ENCODE measurements at regions of chr6 and their contacts with region 1.

Region 1: DNA sequence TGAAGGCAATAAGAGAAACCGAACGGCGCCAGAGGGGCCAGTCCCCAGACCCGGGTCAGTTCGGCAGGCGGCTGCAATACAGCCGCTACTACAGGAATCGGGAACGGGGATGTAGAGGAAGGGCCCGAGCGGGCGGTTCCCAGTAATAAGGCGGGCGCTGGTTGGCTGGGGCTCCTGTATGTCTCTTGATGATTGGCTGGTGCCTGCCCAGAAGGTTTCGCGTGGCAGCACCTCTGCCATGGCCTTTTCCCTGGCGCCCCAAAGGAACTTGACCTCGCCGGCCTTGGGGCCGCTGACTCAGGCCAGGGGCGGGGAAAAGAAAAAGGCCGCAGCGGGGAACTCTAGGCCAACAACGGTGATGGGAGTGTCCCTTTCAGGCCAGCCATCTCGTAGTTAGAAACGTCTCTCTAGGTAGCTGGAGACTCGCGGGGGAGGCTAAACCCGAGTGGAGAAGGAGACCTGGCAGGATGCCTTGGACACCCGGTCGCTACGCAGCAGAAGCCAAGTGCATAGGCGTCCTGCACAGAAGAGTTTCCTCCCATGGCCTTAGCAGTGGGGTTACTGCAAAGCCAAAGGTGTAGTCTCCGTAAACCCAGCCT is at the start of gene IBTK:
- DNase-seq: peak; percentile 92
- H3K4me3 Mint-ChIP-seq: peak within 1 kb of the TSS; percentile 92
- H3K27ac Mint-ChIP-seq: peak within 1 kb of the TSS; percentile 89
- H3K4me1 Mint-ChIP-seq: peaks cover 36% of the 10 kb centered on the region
- H3K27me3 Mint-ChIP-seq: no peaks in the 10 kb centered on the region
- total RNA-seq, gene IBTK: 33.7 to 34.7 TPM

Region 2: DNA sequence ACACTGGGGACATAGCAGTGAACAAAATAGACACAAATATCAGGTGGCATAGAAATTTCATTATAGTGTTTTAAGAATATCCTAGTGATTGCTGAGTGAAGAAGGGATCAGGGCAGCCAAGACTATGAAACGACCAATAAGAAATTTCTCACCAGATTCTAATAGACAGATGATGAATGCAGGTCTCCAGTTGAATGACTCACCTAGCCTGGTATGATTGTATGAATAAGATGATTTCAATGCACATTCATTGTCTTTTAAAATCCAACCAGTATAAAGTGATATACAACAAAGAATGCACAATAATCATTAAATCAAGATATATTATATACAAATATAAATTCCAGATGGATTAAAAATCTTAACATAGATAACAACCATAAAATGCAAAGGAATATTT is 370.8 kb before region 1 on chr6:
- CTCF ChIA-PET with region 1: no interaction called
- POLR2A ChIA-PET with region 1: no interaction called
- DNase-seq: no peak
- H3K4me3 Mint-ChIP-seq: no peak overlapping the region
- H3K27ac Mint-ChIP-seq: no peak overlapping the region
- H3K4me1 Mint-ChIP-seq: no peaks in the 10 kb centered on the region
- H3K27me3 Mint-ChIP-seq: no peaks in the 10 kb centered on the region

Region 3: DNA sequence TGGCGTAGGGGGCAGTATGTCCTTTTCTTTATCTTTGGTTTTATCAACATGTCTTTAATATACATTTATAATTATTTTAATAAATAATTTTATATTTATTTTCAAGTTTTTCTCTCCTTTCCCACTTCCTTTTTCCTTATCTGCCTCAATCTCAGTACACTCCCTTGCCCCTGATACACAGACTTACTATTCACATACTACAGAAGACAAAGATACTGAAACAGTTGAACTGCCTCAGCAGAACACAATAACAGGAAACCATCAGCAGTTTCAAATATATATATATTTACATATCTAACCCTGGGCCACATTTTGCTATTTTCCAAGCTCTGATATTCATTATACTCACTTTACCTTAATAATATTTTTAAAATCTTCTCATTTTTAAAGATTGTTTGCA is 20.0 kb before region 1 on chr6:
- CTCF ChIA-PET with region 1: interaction called, 4 read pairs
- POLR2A ChIA-PET with region 1: interaction called, 15 read pairs
- DNase-seq: no peak
- H3K4me3 Mint-ChIP-seq: no peak overlapping the region
- H3K27ac Mint-ChIP-seq: peak overlapping the region; percentile 65
- H3K4me1 Mint-ChIP-seq: peaks cover 20% of the 10 kb centered on the region
- H3K27me3 Mint-ChIP-seq: no peaks in the 10 kb centered on the region

Region 4: DNA sequence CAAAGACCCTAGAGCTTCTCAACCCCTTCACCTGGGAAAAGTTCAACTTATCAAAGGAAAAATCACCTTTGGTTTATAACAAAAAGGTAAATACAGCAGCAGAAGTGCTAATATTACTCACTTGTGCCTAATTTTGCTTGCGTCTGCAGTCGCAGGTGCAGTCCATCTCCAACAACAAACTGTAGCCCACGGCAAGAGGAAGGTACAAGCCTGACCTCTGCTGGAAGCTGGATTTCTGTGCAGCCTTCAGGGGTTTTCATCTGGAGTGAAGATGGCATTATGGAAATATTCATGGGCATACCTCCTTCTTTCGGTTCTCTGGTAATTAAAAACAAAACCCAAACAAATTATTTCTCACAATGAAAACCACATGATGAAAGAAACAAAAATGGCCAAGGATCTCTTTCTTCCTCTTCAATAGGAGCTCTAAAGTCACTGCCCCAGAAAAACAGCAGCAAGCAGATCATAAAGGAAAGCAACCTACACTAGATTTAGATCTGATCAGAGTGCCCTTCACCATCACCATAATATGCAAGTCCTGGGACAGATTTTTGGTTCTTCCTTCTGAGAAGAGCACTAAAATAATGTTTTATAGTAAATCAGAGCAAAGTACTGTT is 810.1 kb after region 1 on chr6:
- CTCF ChIA-PET with region 1: interaction called, 10 read pairs
- POLR2A ChIA-PET with region 1: no interaction called
- DNase-seq: peak; percentile 20
- H3K4me3 Mint-ChIP-seq: no peak overlapping the region
- H3K27ac Mint-ChIP-seq: no peak overlapping the region
- H3K4me1 Mint-ChIP-seq: no peaks in the 10 kb centered on the region
- H3K27me3 Mint-ChIP-seq: no peaks in the 10 kb centered on the region

Measured in activated CD4-positive, alpha-beta memory T cell treated with anti-CD3 and anti-CD28 coated beads, Interleukin-2, amount 10 ng/mL, durations not matched to agents 7 days and 5 days (primary cell).